Natural killer cell (primary cell): ENCODE measurements at regions of chr12 and their contacts with region 1.

Region 1: GRCh38 chr12:94101738-94102660 is 46.4 kb upstream of the PLXNC1 start:
- DNase-seq: peak; percentile 74 to 93
- ATAC-seq: peak; percentile 89 to 90 (median 89)
- H3K4me3 ChIP-seq: peak overlapping the region; percentile 84
- H3K4me3 Mint-ChIP-seq: peak overlapping the region; percentile 88
- H3K27ac ChIP-seq: peak overlapping the region; percentile 21
- H3K27ac Mint-ChIP-seq: peak overlapping the region in 1 of 2 donors; percentile 69
- H3K4me1 ChIP-seq: peaks cover 15% of the 10 kb centered on the region
- H3K4me1 Mint-ChIP-seq: peaks cover 5% of the 10 kb centered on the region in 2 donors
- H3K27me3 ChIP-seq: peaks cover 3% of the 10 kb centered on the region
- H3K27me3 Mint-ChIP-seq: peaks cover 8 to 31% of the 10 kb centered on the region in 2 donors
- CTCF ChIP-seq: peak; percentile 67

Region 2: DNA sequence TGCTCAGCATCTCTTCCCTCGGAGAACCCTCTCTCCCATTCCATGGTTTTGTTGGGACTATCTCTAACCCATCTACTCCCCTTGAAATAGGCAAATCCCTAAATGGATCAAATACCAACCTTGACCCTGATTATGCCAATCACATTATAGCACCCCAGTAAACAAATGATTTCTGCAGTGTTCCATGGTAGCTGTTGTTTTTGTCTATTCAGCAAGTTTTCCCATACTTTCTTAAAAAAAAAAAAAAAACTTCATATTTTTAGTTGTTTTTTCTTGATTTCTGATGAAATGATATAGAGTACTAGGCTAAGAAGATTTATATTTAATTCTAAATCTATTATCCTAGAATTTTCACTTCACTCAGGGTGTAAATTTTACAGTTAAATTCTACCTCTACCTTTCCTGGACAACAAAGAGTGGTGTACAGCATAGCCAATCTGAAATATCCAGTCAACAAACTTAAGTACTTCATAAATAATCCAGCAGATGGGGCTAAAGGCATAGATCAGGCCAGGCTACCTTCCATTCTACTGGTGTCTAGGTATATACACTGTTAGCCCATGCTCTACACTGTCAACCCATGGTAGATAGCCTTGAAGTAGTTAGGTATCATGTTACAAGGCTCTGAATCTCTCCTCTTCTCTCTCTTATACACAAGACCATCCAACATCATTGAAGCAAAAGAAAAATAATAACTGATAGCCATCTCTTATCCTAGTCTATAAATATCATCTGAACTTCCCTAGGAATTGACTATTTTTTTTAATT is 1317.0 kb before region 1 on chr12:
- intact Hi-C with region 1: loop called (anchors 2 kb)
- DNase-seq: peak in 1 of 2 donors; percentile 80
- ATAC-seq: peak; percentile 89 to 99 (median 98)
- H3K4me3 ChIP-seq: no peak overlapping the region
- H3K4me3 Mint-ChIP-seq: no peak overlapping the region
- H3K27ac ChIP-seq: no peak overlapping the region
- H3K27ac Mint-ChIP-seq: no peak overlapping the region
- H3K4me1 ChIP-seq: no peaks in the 10 kb centered on the region
- H3K4me1 Mint-ChIP-seq: peaks cover 0 to 8% of the 10 kb centered on the region in 2 donors
- H3K27me3 ChIP-seq: no peaks in the 10 kb centered on the region
- H3K27me3 Mint-ChIP-seq: no peaks in the 10 kb centered on the region
- CTCF ChIP-seq: peak; percentile 62

Region 3: DNA sequence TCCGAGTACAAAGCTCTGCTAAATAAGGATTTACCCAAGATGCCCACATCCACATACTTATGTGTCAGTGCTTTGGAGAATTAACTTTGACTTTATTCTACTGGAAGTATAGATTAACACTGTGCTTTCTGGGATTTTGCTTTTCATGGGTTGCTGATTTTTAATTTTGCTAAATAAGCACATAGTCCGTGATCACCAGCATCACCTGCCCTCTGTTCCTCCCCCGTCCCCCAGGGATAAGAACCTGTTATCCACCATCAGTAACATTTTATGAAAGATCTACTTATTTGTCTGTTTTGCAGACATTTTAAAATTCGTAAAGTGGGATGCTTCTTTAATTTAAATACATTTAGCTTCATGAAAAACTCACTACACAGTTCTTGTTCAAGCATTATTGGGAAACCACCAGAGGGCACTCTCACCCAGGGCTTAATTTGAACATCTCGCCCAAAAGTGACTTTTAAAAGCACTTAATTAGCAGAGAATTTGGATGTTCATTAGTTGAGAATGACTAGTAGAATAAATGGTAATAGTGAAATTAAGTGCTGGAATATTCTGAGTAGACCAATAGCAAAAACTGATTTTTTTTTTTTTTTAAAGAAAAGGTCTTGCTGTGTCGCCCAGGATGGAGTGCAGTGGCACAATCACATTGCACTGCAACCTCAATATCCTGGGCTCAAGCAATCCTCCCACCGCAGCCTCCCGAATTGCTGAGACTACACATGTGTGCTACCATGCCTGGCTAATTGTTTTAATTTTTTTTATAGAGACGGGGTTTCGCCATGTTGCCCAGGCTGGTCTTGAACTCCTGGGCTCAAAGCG is 599.0 kb before region 1 on chr12:
- intact Hi-C with region 1: loop called (anchors 1 kb)
- DNase-seq: peak; percentile 43 to 80
- ATAC-seq: peak; percentile 53 to 66 (median 54)
- H3K4me3 ChIP-seq: no peak overlapping the region
- H3K4me3 Mint-ChIP-seq: no peak overlapping the region
- H3K27ac ChIP-seq: no peak overlapping the region
- H3K27ac Mint-ChIP-seq: no peak overlapping the region
- H3K4me1 ChIP-seq: no peaks in the 10 kb centered on the region
- H3K4me1 Mint-ChIP-seq: peaks cover 5% of the 10 kb centered on the region in 2 donors
- H3K27me3 ChIP-seq: no peaks in the 10 kb centered on the region
- H3K27me3 Mint-ChIP-seq: no peaks in the 10 kb centered on the region
- CTCF ChIP-seq: peak; percentile 88

Region 4: GRCh38 chr12:93569656-93570551 is 532.1 kb before region 1 on chr12:
- intact Hi-C with region 1: loop called (anchors 1 kb)
- DNase-seq: peak; percentile 66 to 85
- ATAC-seq: peak; percentile 40 to 63 (median 46)
- H3K4me3 ChIP-seq: peak overlapping the region; percentile 95
- H3K4me3 Mint-ChIP-seq: peak overlapping the region; percentile 95
- H3K27ac ChIP-seq: peak overlapping the region; percentile 80
- H3K27ac Mint-ChIP-seq: peak overlapping the region; percentile 86 to 89
- H3K4me1 ChIP-seq: peaks cover 26% of the 10 kb centered on the region
- H3K4me1 Mint-ChIP-seq: peaks cover 31 to 38% of the 10 kb centered on the region in 2 donors
- H3K27me3 ChIP-seq: peaks cover 5% of the 10 kb centered on the region
- H3K27me3 Mint-ChIP-seq: peaks cover 0 to 4% of the 10 kb centered on the region in 2 donors
- CTCF ChIP-seq: peak; percentile 72

Region 5: GRCh38 chr12:93742110-93742934 is 359.7 kb before region 1 on chr12:
- intact Hi-C with region 1: loop called (anchors 5 kb)
- DNase-seq: peak; percentile 60 to 73
- ATAC-seq: peak; percentile 95 to 96 (median 95)
- H3K4me3 ChIP-seq: peak overlapping the region; percentile 88
- H3K4me3 Mint-ChIP-seq: peak overlapping the region; percentile 98
- H3K27ac ChIP-seq: peak overlapping the region; percentile 77
- H3K27ac Mint-ChIP-seq: peak overlapping the region; percentile 93 to 96
- H3K4me1 ChIP-seq: peaks cover 7% of the 10 kb centered on the region
- H3K4me1 Mint-ChIP-seq: peaks cover 22 to 38% of the 10 kb centered on the region in 2 donors
- H3K27me3 ChIP-seq: no peaks in the 10 kb centered on the region
- H3K27me3 Mint-ChIP-seq: no peaks in the 10 kb centered on the region
- CTCF ChIP-seq: peak; percentile 30

Region 6: GRCh38 chr12:93979189-93979588 is 122.8 kb before region 1 on chr12:
- intact Hi-C with region 1: loop called (anchors 5 kb)
- DNase-seq: peak in 1 of 2 donors; percentile 59
- ATAC-seq: peak in 1 of 3 donors; percentile 55
- H3K4me3 ChIP-seq: no peak overlapping the region
- H3K4me3 Mint-ChIP-seq: no peak overlapping the region
- H3K27ac ChIP-seq: no peak overlapping the region
- H3K27ac Mint-ChIP-seq: peak overlapping the region in 1 of 2 donors; percentile 57
- H3K4me1 ChIP-seq: peaks cover 14% of the 10 kb centered on the region
- H3K4me1 Mint-ChIP-seq: peaks cover 12 to 38% of the 10 kb centered on the region in 2 donors
- H3K27me3 ChIP-seq: no peaks in the 10 kb centered on the region
- H3K27me3 Mint-ChIP-seq: peaks cover 0 to 8% of the 10 kb centered on the region in 2 donors
- CTCF ChIP-seq: peak; percentile 22